Heart left ventricle (tissue), 16 donors: ENCODE measurements at regions of chr2 and their contacts with region 1.

Region 1: DNA sequence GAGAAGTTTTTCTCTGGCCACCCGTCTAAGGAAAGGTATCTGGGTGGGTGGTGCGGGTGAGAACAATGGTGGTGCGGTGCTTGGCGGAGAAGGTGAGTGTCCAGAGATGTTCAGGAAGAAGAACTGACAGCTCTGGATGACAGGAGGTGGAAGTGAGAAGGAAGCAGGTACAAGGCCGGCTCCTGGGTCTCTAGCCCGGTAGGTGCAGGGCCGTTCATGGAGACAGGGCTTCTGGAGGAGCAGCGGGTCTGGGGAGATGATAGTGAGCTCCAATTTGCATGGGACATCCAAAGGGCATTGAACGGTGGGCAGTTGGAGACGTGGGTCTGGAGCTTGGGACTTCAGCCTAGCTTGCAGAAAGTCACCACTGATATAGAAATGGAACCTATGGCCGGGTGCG is 979 bp upstream of the FAHD2B start:
- DNase-seq: no peak
- ATAC-seq: no peak
- H3K4me3 ChIP-seq: peak overlapping the region in 5 of 12 donors; percentile 48 to 62 (median 56)
- H3K27ac ChIP-seq: peak overlapping the region in 2 of 12 donors; percentile 68 to 77
- H3K4me1 ChIP-seq: peaks cover 0 to 9% (median 6%) of the 10 kb centered on the region in 12 donors
- H3K27me3 ChIP-seq: no peaks in the 10 kb centered on the region
- CTCF ChIP-seq: no peak
- POLR2A ChIP-seq: no peak

Region 2: GRCh38 chr2:97011977-97012565 is 83.6 kb before region 1 on chr2:
- intact Hi-C with region 1: loop called in 1 of 10 experiments (anchors 10 kb)
- DNase-seq: no peak
- ATAC-seq: no peak
- H3K4me3 ChIP-seq: no peak overlapping the region
- H3K27ac ChIP-seq: no peak overlapping the region
- H3K4me1 ChIP-seq: no peaks in the 10 kb centered on the region
- H3K27me3 ChIP-seq: peaks cover 0 to 43% (median 0%) of the 10 kb centered on the region in 9 donors
- CTCF ChIP-seq: peak in 8 of 12 donors; percentile 25 to 56 (median 46)
- POLR2A ChIP-seq: no peak